Pancreas (tissue), 10 donors: ENCODE measurements at regions of chr13 and their contacts with region 1.

Region 1: DNA sequence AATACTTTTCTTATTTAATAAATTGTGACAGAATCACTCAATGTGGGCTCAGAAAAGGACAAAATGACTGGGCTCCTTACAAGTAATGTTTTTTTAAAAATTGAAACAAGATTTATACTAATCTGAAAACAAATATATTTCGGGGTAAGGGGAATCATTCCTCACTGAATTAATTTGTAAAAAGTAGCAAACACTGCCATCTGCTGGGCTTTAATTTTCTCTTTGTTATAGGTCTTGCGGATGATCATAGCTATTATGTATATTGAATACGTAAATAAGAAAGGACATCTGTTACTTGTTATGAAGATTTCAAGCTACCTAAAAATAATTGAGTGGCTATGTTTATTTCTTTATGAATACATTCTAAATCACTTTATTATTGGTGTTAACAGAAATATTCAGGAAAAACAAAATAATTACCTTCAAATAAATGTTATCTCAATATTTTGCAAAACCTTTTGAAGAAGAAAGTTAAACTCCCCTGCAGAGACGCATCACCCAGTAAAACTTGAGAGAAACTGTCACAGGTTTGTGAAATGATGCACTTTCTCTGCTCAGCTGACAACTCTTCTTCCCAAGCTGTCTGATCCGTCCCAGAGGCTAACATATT is 17.8 kb upstream of the ENOX1 start:
- DNase-seq: no peak
- ATAC-seq: peak; percentile 58 to 86 (median 83)
- H3K4me3 ChIP-seq: no peak overlapping the region
- H3K27ac ChIP-seq: no peak overlapping the region
- H3K4me1 ChIP-seq: no peaks in the 10 kb centered on the region
- H3K27me3 ChIP-seq: no peaks in the 10 kb centered on the region
- CTCF ChIP-seq: peak in 3 of 4 donors; percentile 26 to 50 (median 38)

Region 2: DNA sequence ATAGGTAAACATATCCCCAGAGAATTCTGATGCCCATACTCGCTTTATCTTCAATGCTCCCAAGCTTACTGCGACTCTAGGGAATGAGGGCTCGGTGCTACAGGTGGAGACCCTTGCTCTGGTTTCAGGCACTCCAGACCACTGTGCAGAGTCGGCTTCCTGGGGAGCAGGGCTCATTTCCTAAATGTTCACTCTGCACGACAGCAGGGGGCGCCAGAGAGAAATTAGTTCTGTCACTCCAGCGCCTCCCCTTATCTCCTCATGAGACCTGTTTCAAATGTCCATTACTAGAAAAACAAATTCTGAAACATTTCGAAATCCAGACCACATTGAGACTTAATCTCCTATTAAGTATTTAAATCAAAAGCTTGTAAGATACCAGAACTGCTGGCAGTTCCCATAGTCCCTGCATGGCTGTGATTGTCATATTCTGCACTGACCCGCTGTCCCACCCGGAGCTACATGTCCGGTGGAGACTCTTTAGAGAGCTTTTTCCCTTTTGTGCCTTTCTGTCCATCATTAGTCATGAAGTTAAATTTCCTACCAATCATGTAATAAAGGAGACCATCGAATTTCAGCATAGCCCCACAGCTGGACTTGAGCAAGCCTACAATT is 834.9 kb before region 1 on chr13:
- intact Hi-C with region 1: loop called in 1 of 3 experiments (anchors 10 kb)
- DNase-seq: peak; percentile 49 to 92 (median 74)
- ATAC-seq: peak; percentile 86 to 95 (median 92)
- H3K4me3 ChIP-seq: no peak overlapping the region
- H3K27ac ChIP-seq: no peak overlapping the region
- H3K4me1 ChIP-seq: peaks cover 0 to 3% (median 0%) of the 10 kb centered on the region in 3 donors
- H3K27me3 ChIP-seq: no peaks in the 10 kb centered on the region
- CTCF ChIP-seq: peak; percentile 49 to 74 (median 61)

Region 3: DNA sequence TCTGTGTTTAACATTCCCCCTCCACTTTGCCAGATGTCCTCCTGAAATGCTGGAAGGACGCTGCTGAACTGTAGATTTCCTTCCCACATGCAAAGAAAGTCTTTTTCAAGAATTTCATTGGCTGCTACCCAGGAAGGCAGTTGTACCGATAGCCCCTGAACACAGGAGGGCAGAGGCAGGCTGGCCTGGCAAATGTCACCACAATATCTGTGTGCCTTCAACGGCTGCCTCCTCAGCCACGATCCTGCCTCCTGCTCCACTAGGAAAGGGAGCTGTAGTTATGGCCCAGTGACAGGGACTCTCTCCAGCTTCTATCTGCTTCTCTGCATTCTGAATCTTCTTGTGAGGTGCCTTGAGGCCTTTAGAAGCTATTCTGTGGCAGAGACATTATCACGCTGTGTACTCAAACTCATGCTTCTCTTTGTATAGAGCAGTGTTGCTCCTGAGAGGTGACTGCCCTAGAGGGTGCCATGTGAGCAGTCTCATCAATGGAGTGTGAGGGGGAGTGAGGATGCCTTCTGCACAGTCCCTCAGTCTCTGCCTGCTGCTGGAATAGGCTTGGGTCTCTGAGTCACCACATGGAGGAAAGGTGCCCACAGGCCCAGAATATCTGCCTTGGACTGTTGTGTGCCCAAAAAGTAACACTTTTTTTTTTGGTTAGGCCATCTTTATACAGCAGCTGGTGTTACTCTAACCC is 501.4 kb before region 1 on chr13:
- intact Hi-C with region 1: loop called in 1 of 3 experiments (anchors 10 kb)
- DNase-seq: peak; percentile 59 to 83 (median 71)
- ATAC-seq: peak; percentile 93 to 96 (median 94)
- H3K4me3 ChIP-seq: no peak overlapping the region
- H3K27ac ChIP-seq: no peak overlapping the region
- H3K4me1 ChIP-seq: peaks cover 0 to 8% (median 6%) of the 10 kb centered on the region in 3 donors
- H3K27me3 ChIP-seq: no peaks in the 10 kb centered on the region
- CTCF ChIP-seq: peak; percentile 16 to 63 (median 47)